ENCODE measurements at regions of chr20 and their contacts with region 1.

Region 1: GRCh38 chr20:22691369-22692118 is 107.2 kb upstream of the FOXA2 start:
- H3K4me3 ChIP-seq: no peak overlapping the region
- H3K27ac ChIP-seq: no peak overlapping the region
- H3K4me1 ChIP-seq: no peaks in the 10 kb centered on the region
- CTCF ChIP-seq: peak; percentile 66

Region 2: DNA sequence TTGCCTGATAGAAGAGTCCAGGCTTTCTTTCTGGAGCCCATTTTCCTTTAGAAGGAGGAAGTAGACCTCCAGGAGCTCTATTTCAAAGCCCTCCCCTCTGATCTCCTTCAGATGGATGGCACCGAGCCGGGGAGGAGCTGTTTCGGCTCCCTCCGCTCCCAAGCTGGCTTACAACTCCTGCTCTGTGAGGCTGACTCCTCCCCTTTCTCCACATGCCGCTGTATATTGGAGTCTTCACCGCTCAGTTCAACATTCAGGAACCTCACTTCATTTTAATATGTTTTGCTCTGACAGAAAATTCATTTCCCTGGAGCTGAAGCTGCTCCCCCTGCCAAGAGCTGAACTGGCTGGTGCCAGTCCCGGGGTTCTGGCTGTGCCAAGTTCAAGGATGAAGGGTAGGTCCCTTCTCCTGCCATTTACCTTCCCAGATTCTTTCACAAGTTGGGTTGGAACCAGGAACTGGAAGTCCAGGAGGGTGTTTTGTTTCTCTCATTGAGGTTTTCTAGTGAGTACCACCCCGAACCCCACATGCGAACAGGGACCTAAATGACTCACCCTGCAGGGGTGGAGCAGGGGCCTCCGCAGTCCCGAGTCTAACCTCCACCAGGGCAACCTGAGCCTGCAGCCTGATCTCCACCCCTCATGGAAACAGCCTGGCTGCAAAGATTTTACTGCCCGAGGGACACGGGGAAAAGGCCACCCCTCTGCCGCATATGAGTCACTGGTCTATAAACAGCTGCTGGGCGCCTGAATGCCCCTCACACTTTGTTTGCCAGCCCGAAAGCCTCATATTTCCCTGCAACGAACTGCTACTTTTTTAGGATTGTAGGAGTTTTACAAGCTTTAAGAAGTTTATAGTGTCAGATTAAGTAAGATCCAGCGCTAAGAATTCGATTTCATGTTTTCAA is 38.6 kb before region 1 on chr20:
- CTCF ChIA-PET with region 1: no interaction called
- POLR2A ChIA-PET with region 1: no interaction called
- H3K4me3 ChIP-seq: no peak overlapping the region
- H3K27ac ChIP-seq: no peak overlapping the region
- H3K4me1 ChIP-seq: no peaks in the 10 kb centered on the region; the same call in 1 of the 2 replicates
- CTCF ChIP-seq: no peak

Region 3: DNA sequence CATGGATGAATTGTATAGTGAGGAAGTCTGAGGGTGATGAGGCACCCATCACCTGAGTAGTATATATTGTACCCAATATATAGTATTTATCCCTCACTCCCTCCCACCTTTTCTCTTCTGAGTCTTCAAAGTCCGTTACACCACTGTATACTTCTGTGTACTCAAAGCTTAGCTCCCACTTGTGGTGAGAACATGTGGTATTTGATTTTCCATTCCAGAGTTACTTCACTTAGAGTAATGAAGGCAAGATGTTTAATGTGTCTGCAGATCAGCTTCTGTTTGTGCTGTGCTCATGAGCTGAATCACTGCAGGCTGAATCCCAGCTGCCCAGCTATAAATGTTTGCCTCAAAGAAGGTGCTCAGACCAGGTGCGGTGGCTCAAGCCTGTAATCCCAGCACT is 32.1 kb after region 1 on chr20:
- CTCF ChIA-PET with region 1: interaction called, 17 read pairs
- POLR2A ChIA-PET with region 1: no interaction called
- H3K4me3 ChIP-seq: no peak overlapping the region
- H3K27ac ChIP-seq: no peak overlapping the region
- H3K4me1 ChIP-seq: no peaks in the 10 kb centered on the region
- CTCF ChIP-seq: no peak

Region 4: DNA sequence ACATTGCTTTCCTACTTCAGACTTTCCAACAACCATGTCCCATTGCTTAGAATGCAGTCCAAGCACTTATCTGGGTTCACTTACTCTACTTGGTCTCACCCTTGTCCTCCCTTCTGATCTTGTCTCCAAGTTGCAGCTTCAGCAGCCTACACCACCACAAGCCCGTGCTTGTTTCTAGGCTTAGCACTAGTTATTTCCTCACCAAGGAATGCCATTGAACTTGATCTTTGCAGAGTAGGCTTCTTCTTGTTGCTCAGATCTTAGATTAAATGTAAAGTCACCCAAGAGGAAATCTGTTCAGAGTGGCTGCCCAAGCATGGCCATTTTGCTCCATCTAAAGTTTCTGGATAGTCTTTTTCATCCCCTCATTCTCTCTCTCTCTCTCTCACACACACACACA is 51.9 kb after region 1 on chr20:
- CTCF ChIA-PET with region 1: no interaction called
- POLR2A ChIA-PET with region 1: no interaction called
- H3K4me3 ChIP-seq: no peak overlapping the region
- H3K27ac ChIP-seq: no peak overlapping the region
- H3K4me1 ChIP-seq: no peaks in the 10 kb centered on the region
- CTCF ChIP-seq: no peak

Region 5: GRCh38 chr20:22974353-22974752 is 282.8 kb after region 1 on chr20:
- CTCF ChIA-PET with region 1: interaction called, 53 read pairs
- POLR2A ChIA-PET with region 1: no interaction called
- H3K4me3 ChIP-seq: no peak overlapping the region
- H3K27ac ChIP-seq: no peak overlapping the region
- H3K4me1 ChIP-seq: no peaks in the 10 kb centered on the region
- CTCF ChIP-seq: no peak

Region 6: DNA sequence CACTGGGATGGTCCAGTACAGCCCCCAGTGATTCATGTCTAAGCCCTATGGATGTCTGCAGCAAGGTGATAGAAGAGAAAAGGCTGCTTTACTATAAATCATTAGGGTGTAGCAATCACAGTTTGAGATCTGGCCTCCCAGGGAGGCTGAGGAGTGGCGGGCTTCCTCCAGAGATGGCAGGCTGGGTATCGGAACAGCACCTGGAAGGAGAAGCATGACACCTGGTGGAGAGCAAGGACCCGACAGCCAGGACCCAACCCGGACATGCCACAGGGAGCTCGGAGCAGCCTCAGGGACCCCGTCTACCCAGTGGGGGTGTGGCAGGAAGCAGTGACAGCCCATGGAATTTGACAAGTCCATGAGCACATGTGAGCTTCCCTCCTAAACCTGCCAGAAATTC is 509.4 kb after region 1 on chr20:
- CTCF ChIA-PET with region 1: interaction called, 21 read pairs
- POLR2A ChIA-PET with region 1: no interaction called
- H3K4me3 ChIP-seq: no peak overlapping the region
- H3K27ac ChIP-seq: no peak overlapping the region
- H3K4me1 ChIP-seq: no peaks in the 10 kb centered on the region
- CTCF ChIP-seq: peak; percentile 41; the same call in 1 of the 2 replicates

Region 7: DNA sequence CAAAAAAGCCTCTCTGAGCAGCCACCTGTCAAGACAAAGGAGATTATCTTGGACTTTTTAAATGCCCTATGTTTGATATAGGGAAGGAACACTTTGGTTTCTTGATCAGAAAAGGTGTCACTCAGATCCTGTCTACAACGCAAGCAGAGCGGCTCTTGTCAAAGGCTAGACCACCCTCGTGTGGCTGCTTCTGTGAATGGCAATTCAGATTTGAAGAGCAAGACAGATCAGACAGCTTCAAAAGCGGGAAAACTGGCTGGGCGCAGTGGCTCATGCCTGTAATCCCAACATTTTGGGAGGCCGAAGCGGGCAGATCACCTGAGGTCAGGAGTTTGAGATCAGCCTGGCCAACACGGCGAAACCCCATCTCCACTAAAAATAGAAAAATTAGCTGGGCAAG is 649.0 kb after region 1 on chr20:
- CTCF ChIA-PET with region 1: interaction called, 57 read pairs
- POLR2A ChIA-PET with region 1: interaction called, 3 read pairs
- H3K4me3 ChIP-seq: no peak overlapping the region
- H3K27ac ChIP-seq: no peak overlapping the region
- H3K4me1 ChIP-seq: no peaks in the 10 kb centered on the region
- CTCF ChIP-seq: peak; percentile 64

Measured in HEK293 (cell line).